B cell (primary cell): ENCODE measurements at regions of chr10 and their contacts with region 1.

Region 1: GRCh38 chr10:6292741-6293151 is 90.0 kb downstream of the PFKFB3 start:
- DNase-seq: no peak
- ATAC-seq: no peak
- H3K4me3 ChIP-seq: no peak overlapping the region
- H3K4me3 Mint-ChIP-seq: no peak overlapping the region
- H3K27ac ChIP-seq: no peak overlapping the region
- H3K27ac Mint-ChIP-seq: no peak overlapping the region
- H3K4me1 ChIP-seq: peaks cover 7 to 12% of the 10 kb centered on the region in 2 donors
- H3K4me1 Mint-ChIP-seq: peaks cover 36% of the 10 kb centered on the region
- H3K27me3 ChIP-seq: no peaks in the 10 kb centered on the region
- H3K27me3 Mint-ChIP-seq: no peaks in the 10 kb centered on the region
- CTCF ChIP-seq: no peak

Region 2: GRCh38 chr10:6328699-6329423 is 36.1 kb after region 1 on chr10:
- CTCF ChIA-PET with region 1: interaction called, 5 read pairs
- POLR2A ChIA-PET with region 1: no interaction called
- intact Hi-C with region 1: loop called (anchors 5 kb)
- DNase-seq: peak; percentile 68
- ATAC-seq: peak; percentile 57
- H3K4me3 ChIP-seq: peak overlapping the region in 4 of 5 experiments; percentile 16 to 54 (median 40)
- H3K4me3 Mint-ChIP-seq: peak overlapping the region; percentile 77
- H3K27ac ChIP-seq: peak overlapping the region; percentile 50 to 62
- H3K27ac Mint-ChIP-seq: peak overlapping the region; percentile 86
- H3K4me1 ChIP-seq: peaks cover 21 to 27% of the 10 kb centered on the region in 2 donors
- H3K4me1 Mint-ChIP-seq: peaks cover 33% of the 10 kb centered on the region
- H3K27me3 ChIP-seq: no peaks in the 10 kb centered on the region
- H3K27me3 Mint-ChIP-seq: no peaks in the 10 kb centered on the region
- CTCF ChIP-seq: no peak